ENCODE measurements at regions of chr11 and their contacts with region 1.

Region 1: GRCh38 chr11:128630367-128631230 is 43.2 kb upstream of the ETS1 start:
- DNase-seq: peak; percentile 62
- ATAC-seq: peak; percentile 94
- H3K4me3 ChIP-seq: no peak overlapping the region
- H3K27ac ChIP-seq: no peak overlapping the region
- H3K4me1 ChIP-seq: no peaks in the 10 kb centered on the region
- H3K27me3 ChIP-seq: peaks cover 1 to 26% of the 10 kb centered on the region in 2 experiments; a peak in 2 of 5 replicates
- CTCF ChIP-seq: peak; percentile 81
- EP300 ChIP-seq: no peak
- POLR2A ChIP-seq: no peak
- RAD21 ChIP-seq: peak; percentile 63

Region 2: DNA sequence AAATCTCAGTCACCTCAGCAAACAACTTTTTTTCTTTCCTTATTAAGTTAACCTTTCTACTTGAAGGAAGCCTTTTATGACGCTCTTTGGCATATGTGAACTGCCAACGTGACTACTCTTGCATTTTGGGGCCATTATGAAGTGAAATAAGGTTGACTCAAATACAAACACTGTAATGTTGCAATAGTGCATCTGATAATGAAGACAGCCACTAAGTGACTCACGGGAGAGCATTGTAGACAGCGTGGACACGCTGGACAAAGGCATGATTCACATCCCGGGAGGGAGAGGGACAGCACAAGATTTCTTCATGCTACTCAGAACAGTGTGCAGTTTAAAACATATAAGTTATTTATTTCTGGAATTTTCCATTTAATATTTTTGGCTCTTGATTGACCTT is 604.0 kb before region 1 on chr11:
- CTCF ChIA-PET with region 1: no interaction called
- POLR2A ChIA-PET with region 1: no interaction called
- in situ Hi-C with region 1: loop called (anchors 5 kb)
- intact Hi-C with region 1: loop called (anchors 1 kb)
- DNase-seq: no peak
- ATAC-seq: no peak
- H3K4me3 ChIP-seq: no peak overlapping the region
- H3K27ac ChIP-seq: no peak overlapping the region
- H3K4me1 ChIP-seq: no peaks in the 10 kb centered on the region
- H3K27me3 ChIP-seq: no peaks in the 10 kb centered on the region
- CTCF ChIP-seq: no peak
- EP300 ChIP-seq: no peak
- POLR2A ChIP-seq: no peak
- RAD21 ChIP-seq: no peak

Region 3: GRCh38 chr11:128039140-128040021 is 591.2 kb before region 1 on chr11:
- CTCF ChIA-PET with region 1: no interaction called
- POLR2A ChIA-PET with region 1: no interaction called
- in situ Hi-C with region 1: loop called (anchors 5 kb)
- intact Hi-C with region 1: no loop called
- DNase-seq: no peak
- ATAC-seq: no peak
- H3K4me3 ChIP-seq: no peak overlapping the region
- H3K27ac ChIP-seq: no peak overlapping the region
- H3K4me1 ChIP-seq: no peaks in the 10 kb centered on the region
- H3K27me3 ChIP-seq: no peaks in the 10 kb centered on the region; a peak in 2 of 5 replicates
- CTCF ChIP-seq: no peak
- EP300 ChIP-seq: no peak
- POLR2A ChIP-seq: no peak
- RAD21 ChIP-seq: no peak

Region 4: GRCh38 chr11:128157423-128158298 is 472.9 kb before region 1 on chr11:
- CTCF ChIA-PET with region 1: interaction called, 12 read pairs
- POLR2A ChIA-PET with region 1: no interaction called
- in situ Hi-C with region 1: no loop called
- intact Hi-C with region 1: loop called (anchors 5 kb)
- DNase-seq: peak; percentile 44
- ATAC-seq: peak; percentile 83
- H3K4me3 ChIP-seq: no peak overlapping the region
- H3K27ac ChIP-seq: no peak overlapping the region
- H3K4me1 ChIP-seq: no peaks in the 10 kb centered on the region
- H3K27me3 ChIP-seq: no peaks in the 10 kb centered on the region
- CTCF ChIP-seq: peak; percentile 41
- EP300 ChIP-seq: no peak
- POLR2A ChIP-seq: no peak
- RAD21 ChIP-seq: 0 out of 2 replicates have a peak, but pooled peaks have one; percentile 24

Region 5: GRCh38 chr11:128172046-128172878 is 458.3 kb before region 1 on chr11:
- CTCF ChIA-PET with region 1: interaction called, 15 read pairs
- POLR2A ChIA-PET with region 1: no interaction called
- in situ Hi-C with region 1: loop called (anchors 5 kb)
- intact Hi-C with region 1: loop called (anchors 1 kb)
- DNase-seq: peak; percentile 46
- ATAC-seq: peak; percentile 80
- H3K4me3 ChIP-seq: no peak overlapping the region
- H3K27ac ChIP-seq: no peak overlapping the region
- H3K4me1 ChIP-seq: no peaks in the 10 kb centered on the region
- H3K27me3 ChIP-seq: no peaks in the 10 kb centered on the region
- CTCF ChIP-seq: peak; percentile 79
- EP300 ChIP-seq: no peak
- POLR2A ChIP-seq: no peak
- RAD21 ChIP-seq: peak; percentile 41; the same call in 1 of the 2 replicates

Region 6: DNA sequence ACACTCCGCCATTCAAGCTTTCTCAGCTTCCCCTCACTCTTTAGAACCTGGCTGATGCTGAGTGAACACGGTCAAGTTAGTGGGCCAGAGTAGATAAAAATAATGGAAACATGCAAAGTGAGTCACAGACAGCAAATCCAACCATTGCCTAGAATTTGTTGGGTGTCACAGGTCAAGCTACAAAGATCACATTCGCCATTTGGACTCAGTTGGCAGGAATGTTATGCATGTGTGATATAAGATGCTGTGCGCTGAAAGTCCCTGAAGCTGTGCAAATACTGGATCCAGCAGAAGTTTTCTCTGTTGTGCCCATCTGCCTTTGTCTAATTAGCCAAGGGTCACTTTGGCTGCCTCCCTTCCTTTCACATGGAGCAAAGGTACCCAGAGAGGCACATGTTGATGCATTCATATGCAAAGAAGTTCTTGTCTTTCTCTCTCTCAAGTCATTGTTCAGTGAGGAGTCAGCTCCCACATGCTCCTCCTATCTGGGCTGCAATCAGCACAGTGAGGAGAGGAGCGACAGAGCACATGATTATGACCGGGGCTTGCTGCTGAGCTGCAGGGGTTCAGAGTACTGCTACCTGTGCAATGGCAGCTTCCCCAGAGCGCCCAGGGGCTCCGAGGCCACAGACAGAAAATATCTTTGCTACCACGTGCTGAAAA is 103.0 kb after region 1 on chr11:
- CTCF ChIA-PET with region 1: no interaction called
- POLR2A ChIA-PET with region 1: no interaction called
- in situ Hi-C with region 1: no loop called
- intact Hi-C with region 1: no loop called
- DNase-seq: no peak
- ATAC-seq: no peak
- H3K4me3 ChIP-seq: no peak overlapping the region
- H3K27ac ChIP-seq: no peak overlapping the region
- H3K4me1 ChIP-seq: no peaks in the 10 kb centered on the region
- H3K27me3 ChIP-seq: peaks cover 0 to 23% of the 10 kb centered on the region in 2 experiments; a peak in 3 of 5 replicates
- CTCF ChIP-seq: no peak
- EP300 ChIP-seq: no peak
- POLR2A ChIP-seq: no peak
- RAD21 ChIP-seq: no peak

Region 7: DNA sequence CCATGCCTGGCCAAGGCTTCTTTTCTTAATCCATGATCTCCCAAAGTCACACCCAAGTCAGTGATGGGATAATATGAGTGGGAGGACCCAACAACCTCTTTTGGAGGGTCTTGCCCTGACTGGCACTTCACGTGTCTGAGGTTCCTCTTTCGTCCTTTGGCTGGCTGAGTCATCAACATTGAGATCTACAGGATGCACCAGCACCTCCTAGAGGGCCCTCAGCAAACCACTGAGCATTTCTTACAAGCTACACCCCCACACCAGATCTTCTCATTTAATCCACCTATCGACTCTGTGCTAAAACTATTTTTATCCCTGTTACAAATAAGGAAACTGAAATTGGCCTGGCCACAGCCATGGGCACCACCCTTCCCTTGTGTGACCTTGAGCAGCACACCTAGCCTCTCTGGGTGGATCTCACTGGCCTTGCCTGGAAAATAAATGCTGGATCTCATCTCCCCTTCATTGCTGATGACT is 126.7 kb after region 1 on chr11:
- CTCF ChIA-PET with region 1: no interaction called
- POLR2A ChIA-PET with region 1: no interaction called
- in situ Hi-C with region 1: no loop called
- intact Hi-C with region 1: no loop called
- DNase-seq: no peak
- ATAC-seq: no peak
- H3K4me3 ChIP-seq: no peak overlapping the region
- H3K27ac ChIP-seq: no peak overlapping the region
- H3K4me1 ChIP-seq: no peaks in the 10 kb centered on the region
- H3K27me3 ChIP-seq: peaks cover 0 to 7% of the 10 kb centered on the region in 2 experiments; a peak in 1 of 5 replicates
- CTCF ChIP-seq: no peak
- EP300 ChIP-seq: no peak
- POLR2A ChIP-seq: no peak
- RAD21 ChIP-seq: no peak

Measured in HepG2 (cell line).